ENCODE measurements at regions of chr7 and their contacts with region 1.

Region 1: GRCh38 chr7:19051767-19052375 is 65.6 kb downstream of the TWIST1 start:
- DNase-seq: peak; percentile 18
- H3K4me3 ChIP-seq: no peak overlapping the region
- H3K27ac ChIP-seq: no peak overlapping the region
- H3K4me1 ChIP-seq: no peaks in the 10 kb centered on the region
- H3K27me3 ChIP-seq: no peaks in the 10 kb centered on the region
- CTCF ChIP-seq: peak; percentile 55 to 77 (median 58)
- EP300 ChIP-seq: no peak
- POLR2A ChIP-seq: no peak

Region 2: DNA sequence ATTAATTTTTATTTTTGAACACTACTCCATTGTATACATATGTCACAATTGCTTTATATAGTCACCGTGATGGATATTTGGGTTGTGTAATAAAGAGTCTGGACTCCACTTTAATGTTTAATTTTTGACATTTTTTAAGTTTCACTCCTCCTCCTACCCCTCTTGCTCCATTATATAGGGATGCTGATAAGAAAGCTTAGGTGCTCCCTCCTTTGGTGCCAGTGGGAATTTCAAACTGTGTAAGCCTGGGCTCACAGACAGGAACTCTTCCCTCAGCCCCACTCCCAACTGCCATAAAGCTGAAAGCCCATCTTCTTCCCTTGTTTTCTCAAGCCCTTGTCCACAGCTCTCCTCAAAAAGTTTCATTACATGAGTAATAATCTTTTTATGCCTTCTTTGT is 18.0 kb after region 1 on chr7:
- in situ Hi-C with region 1: no loop called
- intact Hi-C with region 1: loop called (anchors 2 kb)
- DNase-seq: no peak
- H3K4me3 ChIP-seq: no peak overlapping the region
- H3K27ac ChIP-seq: no peak overlapping the region
- H3K4me1 ChIP-seq: no peaks in the 10 kb centered on the region
- H3K27me3 ChIP-seq: no peaks in the 10 kb centered on the region
- CTCF ChIP-seq: no peak
- EP300 ChIP-seq: no peak
- POLR2A ChIP-seq: no peak

Measured in transverse colon (tissue), 4 donors.